ENCODE measurements at regions of chr9 and their contacts with region 1.

Region 1: DNA sequence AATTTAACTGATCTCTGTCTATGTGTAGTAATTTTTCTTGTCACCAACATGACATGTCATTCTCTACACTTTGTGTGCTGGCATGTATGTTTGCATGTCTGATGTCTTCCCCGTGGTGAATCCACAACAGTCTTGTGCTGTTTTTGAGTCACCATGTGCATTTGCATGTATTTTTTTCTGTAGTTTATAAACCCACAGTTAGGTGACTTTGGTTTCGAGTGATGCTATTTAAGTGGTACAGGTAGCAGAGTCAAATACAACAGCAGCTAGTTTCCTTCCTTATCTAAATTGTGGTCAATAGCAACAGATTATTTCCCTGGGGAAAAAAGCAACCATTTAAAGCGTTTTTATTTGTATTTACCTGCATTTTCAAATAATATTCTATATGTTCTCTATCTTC is 89.9 kb upstream of the FSD1L start:
- DNase-seq: no peak
- H3K4me3 ChIP-seq: no peak overlapping the region
- H3K27ac ChIP-seq: no peak overlapping the region
- H3K4me1 ChIP-seq: no peaks in the 10 kb centered on the region
- H3K27me3 ChIP-seq: no peaks in the 10 kb centered on the region
- CTCF ChIP-seq: no peak
- EP300 ChIP-seq: no peak
- POLR2A ChIP-seq: no peak
- RAD21 ChIP-seq: no peak

Region 2: GRCh38 chr9:105371691-105372090 is 13.8 kb after region 1 on chr9:
- CTCF ChIA-PET with region 1: interaction called, 11 read pairs
- POLR2A ChIA-PET with region 1: interaction called, 3 read pairs
- DNase-seq: no peak
- H3K4me3 ChIP-seq: no peak overlapping the region
- H3K27ac ChIP-seq: no peak overlapping the region
- H3K4me1 ChIP-seq: no peaks in the 10 kb centered on the region
- H3K27me3 ChIP-seq: no peaks in the 10 kb centered on the region
- CTCF ChIP-seq: no peak
- EP300 ChIP-seq: no peak
- POLR2A ChIP-seq: no peak
- RAD21 ChIP-seq: no peak

Region 3: GRCh38 chr9:105385381-105385985 is 27.5 kb after region 1 on chr9:
- CTCF ChIA-PET with region 1: no interaction called
- POLR2A ChIA-PET with region 1: no interaction called
- DNase-seq: no peak
- H3K4me3 ChIP-seq: no peak overlapping the region
- H3K27ac ChIP-seq: no peak overlapping the region
- H3K4me1 ChIP-seq: peaks cover 0 to 8% (median 3%) of the 10 kb centered on the region in 4 experiments; a peak in 5 of 7 replicates
- H3K27me3 ChIP-seq: no peaks in the 10 kb centered on the region
- CTCF ChIP-seq: no peak
- EP300 ChIP-seq: no peak
- POLR2A ChIP-seq: no peak
- RAD21 ChIP-seq: no peak

Region 4: DNA sequence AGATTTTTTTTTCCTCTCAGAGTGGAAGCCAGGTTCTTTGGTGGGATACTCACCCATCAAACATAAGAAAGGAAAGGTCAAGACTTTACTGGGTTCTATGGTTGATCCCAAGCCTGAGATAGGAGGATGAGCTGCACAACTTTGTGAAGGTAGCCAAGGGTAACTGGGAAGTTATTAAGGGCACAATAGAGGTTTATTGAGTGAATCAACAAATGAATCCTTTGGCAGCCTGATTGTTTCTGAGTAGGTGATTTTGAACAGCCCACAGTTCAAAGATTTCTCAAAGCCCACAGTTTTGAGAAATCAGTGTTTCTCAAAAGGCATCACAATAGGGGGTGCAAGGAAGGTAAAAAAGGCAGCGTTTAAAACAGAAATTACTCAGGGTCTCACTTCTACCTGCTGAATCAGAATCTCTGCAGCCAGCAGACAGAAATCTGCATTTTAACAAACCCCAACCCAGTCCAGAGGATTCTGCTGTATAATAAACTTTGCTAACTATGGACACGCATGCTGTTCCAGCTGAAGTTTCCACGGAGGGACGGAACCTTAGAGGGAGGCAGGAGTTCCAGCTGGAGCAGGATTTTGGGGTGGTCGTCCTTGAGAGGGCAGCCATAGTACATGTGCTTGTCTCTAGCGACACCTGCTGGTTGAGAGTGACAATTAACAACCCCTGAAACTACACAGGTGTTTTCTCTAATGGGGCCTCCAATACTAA is 57.2 kb after region 1 on chr9:
- CTCF ChIA-PET with region 1: interaction called, 17 read pairs
- POLR2A ChIA-PET with region 1: no interaction called
- DNase-seq: peak in 1 of 2 experiments; percentile 83
- H3K4me3 ChIP-seq: peak overlapping the region in 2 of 4 experiments; percentile 20 to 45; a peak in 2 of 8 replicates
- H3K27ac ChIP-seq: no peak overlapping the region
- H3K4me1 ChIP-seq: peaks cover 0 to 14% (median 6%) of the 10 kb centered on the region in 4 experiments; a peak in 6 of 7 replicates
- H3K27me3 ChIP-seq: no peaks in the 10 kb centered on the region
- CTCF ChIP-seq: peak; percentile 51 to 89 (median 81)
- EP300 ChIP-seq: 0 out of 3 replicates have a peak, but pooled peaks of 1 of the 2 experiments have one; percentile 28
- POLR2A ChIP-seq: no peak
- RAD21 ChIP-seq: peak; percentile 99

Region 5: GRCh38 chr9:105483618-105484017 is 125.7 kb after region 1 on chr9:
- CTCF ChIA-PET with region 1: no interaction called
- POLR2A ChIA-PET with region 1: no interaction called
- DNase-seq: no peak
- H3K4me3 ChIP-seq: no peak overlapping the region
- H3K27ac ChIP-seq: no peak overlapping the region
- H3K4me1 ChIP-seq: no peaks in the 10 kb centered on the region
- H3K27me3 ChIP-seq: no peaks in the 10 kb centered on the region
- CTCF ChIP-seq: no peak
- EP300 ChIP-seq: no peak
- POLR2A ChIP-seq: no peak
- RAD21 ChIP-seq: no peak